Psoas muscle (tissue), 8 donors: ENCODE measurements at regions of chr15 and their contacts with region 1.

Region 1: DNA sequence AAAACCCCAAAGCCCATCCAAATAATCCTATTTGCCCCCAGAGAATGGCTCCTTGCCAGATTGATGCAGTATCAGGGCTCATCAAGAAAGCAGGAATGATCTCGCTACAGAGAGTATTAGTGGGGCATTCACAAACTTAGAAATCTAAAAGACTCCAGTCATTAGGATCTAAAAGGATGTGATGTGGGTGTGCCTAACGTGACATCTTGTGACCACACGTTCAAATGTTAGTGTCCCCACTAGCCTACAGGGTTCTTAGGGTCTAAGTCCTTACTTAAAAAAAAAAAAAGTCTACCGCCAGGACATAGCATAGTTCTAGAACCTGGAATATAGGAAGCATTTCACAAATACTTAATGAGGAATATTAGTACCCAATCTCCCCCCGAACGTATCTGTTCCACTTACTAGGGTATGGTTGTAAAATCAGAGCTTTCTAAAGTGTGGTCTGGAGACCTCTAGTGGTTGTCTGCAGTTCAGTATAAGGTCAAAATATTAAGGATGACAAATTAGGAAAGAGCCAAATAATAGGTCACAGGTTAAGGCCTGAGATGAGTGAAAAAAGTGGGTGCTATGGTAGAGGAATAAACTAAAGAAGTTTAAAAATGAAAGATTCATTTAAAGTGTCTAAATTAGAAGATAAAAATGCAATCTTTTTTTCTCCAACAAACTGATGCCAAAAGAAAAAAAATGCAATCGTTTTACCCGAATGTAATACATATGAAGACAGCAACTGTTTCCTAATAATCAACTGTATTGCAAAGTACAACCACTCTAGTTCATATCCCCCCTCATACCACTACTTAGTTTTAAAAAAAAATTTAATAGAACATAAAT is 4.2 kb upstream of the CHRM5 start:
- DNase-seq: no peak
- ATAC-seq: peak in 3 of 4 donors; percentile 47 to 67 (median 58)
- H3K4me3 ChIP-seq: no peak overlapping the region
- H3K27ac ChIP-seq: no peak overlapping the region
- H3K4me1 ChIP-seq: peaks cover 4% of the 10 kb centered on the region
- H3K27me3 ChIP-seq: no peaks in the 10 kb centered on the region
- CTCF ChIP-seq: peak; percentile 48

Region 2: GRCh38 chr15:33310481-33311311 is 653.4 kb before region 1 on chr15 and contains the start of gene RYR3:
- intact Hi-C with region 1: no loop called
- DNase-seq: peak; percentile 43 to 73
- ATAC-seq: peak; percentile 79 to 82 (median 80)
- H3K4me3 ChIP-seq: peak within 1 kb of the TSS; percentile 72
- H3K27ac ChIP-seq: peak within 1 kb of the TSS; percentile 74
- H3K4me1 ChIP-seq: peaks cover 6% of the 10 kb centered on the region
- H3K27me3 ChIP-seq: peaks cover 0 to 19% (median 11%) of the 10 kb centered on the region in 3 donors
- CTCF ChIP-seq: no peak
- total RNA-seq, gene RYR3: 24.0 to 159 (median 114) TPM

Region 3: GRCh38 chr15:33737687-33738601 is 226.1 kb before region 1 on chr15:
- intact Hi-C with region 1: loop called in 1 of 2 experiments (anchors 5 kb)
- DNase-seq: no peak
- ATAC-seq: peak in 3 of 4 donors; percentile 57 to 69 (median 65)
- H3K4me3 ChIP-seq: no peak overlapping the region
- H3K27ac ChIP-seq: no peak overlapping the region
- H3K4me1 ChIP-seq: peaks cover 7% of the 10 kb centered on the region
- H3K27me3 ChIP-seq: no peaks in the 10 kb centered on the region
- CTCF ChIP-seq: peak; percentile 62

Region 4: DNA sequence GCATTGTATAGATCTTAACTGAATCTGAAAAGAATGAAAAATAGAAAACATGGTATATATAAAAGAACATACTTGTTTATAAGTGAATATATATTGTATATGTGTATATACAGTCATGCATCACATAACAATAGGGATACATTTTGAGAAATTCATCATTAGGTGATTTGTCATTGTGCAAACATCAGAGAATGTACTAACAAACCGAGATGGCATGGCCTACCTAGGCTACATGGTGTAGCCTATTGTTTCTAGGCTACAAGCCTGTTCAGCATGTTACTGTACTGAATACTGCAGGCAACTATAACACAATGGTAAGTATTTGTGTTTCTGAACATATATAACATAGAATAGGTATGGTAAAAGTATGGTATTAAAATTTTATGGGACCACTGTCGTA is 60.4 kb before region 1 on chr15:
- intact Hi-C with region 1: no loop called
- DNase-seq: no peak
- ATAC-seq: no peak
- H3K4me3 ChIP-seq: no peak overlapping the region
- H3K27ac ChIP-seq: no peak overlapping the region
- H3K4me1 ChIP-seq: no peaks in the 10 kb centered on the region
- H3K27me3 ChIP-seq: no peaks in the 10 kb centered on the region
- CTCF ChIP-seq: no peak

Region 5: DNA sequence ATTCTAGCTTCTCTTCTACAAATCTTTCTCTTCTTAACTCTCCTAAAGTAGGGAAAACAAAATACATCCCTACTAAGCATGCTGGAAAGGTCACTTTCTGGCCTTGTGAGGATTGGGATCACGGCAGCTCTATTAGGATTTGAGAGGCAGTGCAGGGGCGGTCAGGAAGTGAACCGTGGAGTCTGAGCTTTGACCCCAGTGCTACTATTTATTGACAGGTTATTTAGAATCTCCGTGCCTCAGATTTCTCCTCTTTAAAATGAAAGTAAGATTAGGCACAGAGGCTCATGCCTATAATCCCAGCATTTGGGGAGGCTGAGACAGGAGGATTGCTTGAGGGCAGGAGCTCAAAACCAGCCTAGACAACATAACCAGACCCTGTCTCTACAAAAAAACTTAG is 37.8 kb before region 1 on chr15:
- intact Hi-C with region 1: no loop called
- DNase-seq: no peak
- ATAC-seq: no peak
- H3K4me3 ChIP-seq: no peak overlapping the region
- H3K27ac ChIP-seq: no peak overlapping the region
- H3K4me1 ChIP-seq: no peaks in the 10 kb centered on the region
- H3K27me3 ChIP-seq: no peaks in the 10 kb centered on the region
- CTCF ChIP-seq: no peak